Activated B cell treated with CpG ODN at 0.5 μM for 24 hours (primary cell): ENCODE measurements at regions of chr1 and their contacts with region 1.

Region 1: GRCh38 chr1:66242646-66243547 is 291.1 kb upstream of the SGIP1 start:
- DNase-seq: peak; percentile 46
- ATAC-seq: peak; percentile 92
- H3K4me3 Mint-ChIP-seq: no peak overlapping the region
- H3K27ac Mint-ChIP-seq: no peak overlapping the region
- H3K4me1 Mint-ChIP-seq: peaks cover 8% of the 10 kb centered on the region
- H3K27me3 Mint-ChIP-seq: peaks cover 12% of the 10 kb centered on the region
- CTCF ChIP-seq: no peak

Region 2: DNA sequence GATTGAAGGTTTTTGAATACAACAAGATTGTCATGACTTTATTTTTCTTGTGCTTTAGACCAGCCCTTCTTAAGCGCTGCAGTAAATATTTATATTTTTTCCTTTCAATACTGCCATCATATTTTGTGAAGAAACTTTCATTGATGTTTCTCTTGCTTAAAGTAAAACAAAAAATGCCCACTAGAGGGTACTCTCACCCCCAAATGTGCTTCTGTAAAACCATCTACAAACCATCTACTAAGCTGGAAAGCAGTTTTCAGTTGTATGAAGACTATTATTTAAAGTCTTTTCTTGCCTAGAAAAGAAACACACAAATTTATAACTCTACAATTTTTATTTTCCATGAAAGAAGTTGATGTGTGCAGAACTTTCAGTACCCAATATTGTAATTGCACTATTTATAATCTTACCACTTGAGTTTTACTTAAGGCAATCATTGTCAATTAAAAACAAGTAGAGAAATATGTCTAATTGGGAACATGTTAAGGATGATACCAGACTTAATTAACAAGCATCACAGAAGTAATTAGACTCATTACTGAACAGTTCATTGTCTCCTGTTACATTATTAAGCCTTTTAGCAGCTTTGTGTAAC is 811.7 kb before region 1 on chr1:
- CTCF ChIA-PET with region 1: no interaction called
- POLR2A ChIA-PET with region 1: no interaction called
- intact Hi-C with region 1: loop called (anchors 5 kb)
- DNase-seq: no peak
- ATAC-seq: no peak
- H3K4me3 Mint-ChIP-seq: no peak overlapping the region
- H3K27ac Mint-ChIP-seq: no peak overlapping the region
- H3K4me1 Mint-ChIP-seq: no peaks in the 10 kb centered on the region
- H3K27me3 Mint-ChIP-seq: no peaks in the 10 kb centered on the region
- CTCF ChIP-seq: no peak

Region 3: DNA sequence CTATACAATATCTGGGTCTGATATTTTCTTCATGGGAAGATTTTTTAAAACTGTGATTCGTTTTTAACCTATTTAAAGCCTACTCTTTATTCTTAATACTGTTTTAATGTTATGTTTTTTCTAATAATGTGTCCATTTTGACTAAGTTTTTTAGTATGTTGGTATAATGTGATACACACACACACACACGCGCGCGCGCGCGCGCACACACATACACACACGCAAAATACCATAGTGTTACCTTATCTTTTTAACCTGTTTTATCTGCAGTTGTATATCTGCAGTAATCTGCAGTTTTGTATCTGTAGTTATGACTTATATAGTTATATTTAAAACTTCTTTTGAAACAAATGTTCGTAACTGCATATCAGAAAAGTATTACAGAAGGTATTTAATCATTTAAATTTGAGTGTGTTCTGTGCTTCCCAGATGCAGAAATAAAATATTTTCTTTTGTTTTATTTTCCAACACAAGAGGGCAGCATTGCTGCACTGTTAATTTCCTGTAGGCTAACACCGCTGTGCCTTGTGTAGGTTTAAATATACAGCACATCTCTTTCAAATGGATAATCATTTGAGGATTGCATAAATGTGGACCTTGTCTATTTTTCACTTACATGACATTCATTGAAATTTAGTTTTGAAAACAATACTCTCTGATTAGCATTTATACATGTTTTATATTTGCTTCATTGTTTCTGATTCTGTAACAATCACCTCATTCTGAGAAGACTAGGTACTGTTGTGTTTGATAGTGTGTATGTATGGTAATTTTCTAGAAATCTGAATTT is 284.1 kb before region 1 on chr1:
- CTCF ChIA-PET with region 1: interaction called, 72 read pairs
- POLR2A ChIA-PET with region 1: no interaction called
- intact Hi-C with region 1: loop called (anchors 1 kb)
- DNase-seq: no peak
- ATAC-seq: peak; percentile 40
- H3K4me3 Mint-ChIP-seq: no peak overlapping the region
- H3K27ac Mint-ChIP-seq: no peak overlapping the region
- H3K4me1 Mint-ChIP-seq: peaks cover 4% of the 10 kb centered on the region
- H3K27me3 Mint-ChIP-seq: no peaks in the 10 kb centered on the region
- CTCF ChIP-seq: peak; percentile 44

Region 4: GRCh38 chr1:66436378-66437145 is 193.7 kb after region 1 on chr1:
- CTCF ChIA-PET with region 1: interaction called, 437 read pairs
- POLR2A ChIA-PET with region 1: no interaction called
- intact Hi-C with region 1: no loop called
- DNase-seq: no peak
- ATAC-seq: peak; percentile 65
- H3K4me3 Mint-ChIP-seq: no peak overlapping the region
- H3K27ac Mint-ChIP-seq: peak overlapping the region; percentile 63
- H3K4me1 Mint-ChIP-seq: peaks cover 38% of the 10 kb centered on the region
- H3K27me3 Mint-ChIP-seq: no peaks in the 10 kb centered on the region
- CTCF ChIP-seq: no peak

Region 5: GRCh38 chr1:66503841-66504470 is 261.1 kb after region 1 on chr1:
- CTCF ChIA-PET with region 1: interaction called, 12 read pairs
- POLR2A ChIA-PET with region 1: no interaction called
- intact Hi-C with region 1: no loop called
- DNase-seq: no peak
- ATAC-seq: no peak
- H3K4me3 Mint-ChIP-seq: no peak overlapping the region
- H3K27ac Mint-ChIP-seq: no peak overlapping the region
- H3K4me1 Mint-ChIP-seq: no peaks in the 10 kb centered on the region
- H3K27me3 Mint-ChIP-seq: peaks cover 15% of the 10 kb centered on the region
- CTCF ChIP-seq: no peak

Region 6: DNA sequence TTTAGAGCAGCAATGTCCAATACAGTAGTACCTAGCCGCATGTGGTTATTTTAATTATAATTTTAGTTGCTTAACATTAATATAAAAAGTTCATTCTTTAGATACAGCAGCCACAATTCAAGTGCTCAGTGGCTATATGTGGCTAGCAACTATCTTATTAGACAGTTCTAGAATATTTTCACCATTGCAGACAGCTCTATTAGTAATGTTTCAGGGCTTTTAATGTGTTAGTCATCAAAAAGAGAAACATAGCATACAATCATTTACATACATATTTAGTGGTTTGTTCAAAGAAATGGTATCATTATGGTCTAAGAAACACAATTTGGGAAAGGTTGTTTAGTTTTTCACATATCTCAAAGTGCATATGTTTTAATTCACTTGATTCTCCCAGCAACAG is 442.8 kb after region 1 on chr1:
- CTCF ChIA-PET with region 1: no interaction called
- POLR2A ChIA-PET with region 1: no interaction called
- intact Hi-C with region 1: no loop called
- DNase-seq: no peak
- ATAC-seq: no peak
- H3K4me3 Mint-ChIP-seq: no peak overlapping the region
- H3K27ac Mint-ChIP-seq: no peak overlapping the region
- H3K4me1 Mint-ChIP-seq: no peaks in the 10 kb centered on the region
- H3K27me3 Mint-ChIP-seq: peaks cover 9% of the 10 kb centered on the region
- CTCF ChIP-seq: no peak

Region 7: DNA sequence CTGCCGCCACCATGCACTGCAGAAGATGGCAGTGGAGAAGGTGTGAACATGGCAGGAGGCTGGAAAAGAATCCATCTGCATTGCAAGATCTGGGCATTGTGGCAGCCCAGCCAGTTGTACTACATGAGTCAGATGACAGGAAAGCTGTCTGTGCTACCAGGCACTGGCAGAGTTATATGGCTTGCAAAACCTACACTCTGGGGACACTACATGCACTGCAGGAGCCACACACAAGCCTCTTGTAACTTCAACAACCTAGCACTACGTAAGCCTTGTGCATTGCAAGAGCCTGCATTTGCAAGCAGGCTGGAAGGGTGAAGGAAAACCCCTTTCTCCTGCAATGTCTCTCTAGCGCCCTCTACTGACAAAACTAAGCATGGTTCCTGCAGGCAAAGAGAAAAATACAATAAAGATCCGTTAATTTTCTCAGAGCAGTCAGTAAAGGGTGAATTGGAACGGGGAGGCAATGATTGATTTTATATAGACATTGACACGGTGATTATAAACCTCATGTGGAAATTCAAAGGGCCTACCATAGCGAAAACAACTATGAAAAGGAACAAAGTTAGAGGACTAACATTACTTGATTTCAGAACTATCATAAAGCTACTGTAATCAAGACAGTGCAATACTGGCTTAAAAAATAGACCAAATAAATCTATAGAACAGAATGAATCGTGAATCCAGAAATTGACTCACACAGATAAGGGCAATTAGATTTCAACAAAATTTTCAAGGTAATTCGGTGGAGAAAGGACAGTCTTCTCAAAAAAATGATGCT is 483.2 kb after region 1 on chr1:
- CTCF ChIA-PET with region 1: interaction called, 7 read pairs
- POLR2A ChIA-PET with region 1: no interaction called
- intact Hi-C with region 1: loop called (anchors 2 kb)
- DNase-seq: no peak
- ATAC-seq: peak; percentile 85
- H3K4me3 Mint-ChIP-seq: no peak overlapping the region
- H3K27ac Mint-ChIP-seq: no peak overlapping the region
- H3K4me1 Mint-ChIP-seq: no peaks in the 10 kb centered on the region
- H3K27me3 Mint-ChIP-seq: peaks cover 19% of the 10 kb centered on the region
- CTCF ChIP-seq: peak; percentile 93